Stomach (tissue), 19 donors: ENCODE measurements at regions of chr5 and their contacts with region 1.

Region 1: DNA sequence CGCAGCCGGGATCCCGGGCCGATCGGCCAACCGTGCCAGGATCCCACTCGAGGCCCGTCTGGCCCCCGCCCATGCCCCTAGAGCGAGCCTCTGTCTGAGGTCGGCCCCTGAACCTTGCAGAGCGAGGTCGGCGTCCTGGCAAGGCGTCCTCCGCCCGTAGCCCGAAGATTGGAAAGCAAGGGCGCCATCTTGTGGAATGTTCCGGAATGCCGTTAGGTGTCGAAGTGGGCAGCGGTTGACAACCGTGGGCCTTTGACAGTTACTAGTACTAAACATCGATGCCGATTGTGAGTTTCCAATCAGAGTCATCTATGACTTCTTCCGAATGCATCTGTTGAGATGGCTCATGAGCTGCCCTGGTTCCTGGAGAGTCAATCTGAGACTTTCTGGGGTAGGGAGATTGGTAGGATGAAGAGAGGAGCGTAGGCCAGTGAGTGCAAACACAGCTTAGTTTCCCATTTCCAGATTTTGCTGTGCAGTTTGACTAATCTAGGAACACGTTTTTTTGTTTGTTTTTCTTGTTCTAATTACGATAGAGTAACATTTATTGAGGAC is 923 bp upstream of the PLK2 start:
- DNase-seq: peak; percentile 93 to 96
- H3K4me3 ChIP-seq: peak overlapping the region; percentile 64 to 85 (median 74)
- H3K27ac ChIP-seq: peak overlapping the region; percentile 93 to 99 (median 95)
- H3K4me1 ChIP-seq: peaks cover 5 to 50% (median 16%) of the 10 kb centered on the region in 4 donors
- H3K27me3 ChIP-seq: peaks cover 0 to 4% (median 0%) of the 10 kb centered on the region in 3 donors
- CTCF ChIP-seq: peak in 5 of 7 experiments; percentile 56 to 82 (median 69)
- EP300 ChIP-seq: no peak
- POLR2A ChIP-seq: no peak

Region 2: DNA sequence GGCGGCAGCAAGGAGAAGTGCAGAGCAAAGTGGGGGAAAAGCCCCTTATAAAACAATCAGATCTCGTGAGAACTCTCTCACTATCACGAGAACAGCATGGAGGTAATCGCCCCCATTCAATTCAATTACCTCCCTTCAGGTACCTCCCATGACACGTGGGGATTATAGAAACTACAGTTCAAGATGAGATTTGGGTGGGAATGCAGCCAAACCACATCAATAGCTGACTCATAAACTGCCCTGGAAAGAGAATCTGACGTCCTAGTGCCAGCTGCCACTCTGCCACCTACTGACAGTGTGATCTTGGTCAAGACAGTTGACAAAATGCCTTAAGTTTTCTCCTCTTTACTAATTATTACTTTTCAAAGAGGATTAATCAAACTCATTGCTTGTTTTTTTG is 1158.6 kb before region 1 on chr5:
- intact Hi-C with region 1: loop called (anchors 5 kb)
- DNase-seq: peak in 1 of 2 donors; percentile 34
- H3K4me3 ChIP-seq: no peak overlapping the region
- H3K27ac ChIP-seq: no peak overlapping the region
- H3K4me1 ChIP-seq: peaks cover 6 to 18% (median 10%) of the 10 kb centered on the region in 4 donors
- H3K27me3 ChIP-seq: no peaks in the 10 kb centered on the region
- CTCF ChIP-seq: no peak
- EP300 ChIP-seq: no peak
- POLR2A ChIP-seq: no peak

Region 3: GRCh38 chr5:57499262-57500050 is 961.4 kb before region 1 on chr5:
- intact Hi-C with region 1: loop called (anchors 10 kb)
- DNase-seq: peak in 1 of 2 donors; percentile 77
- H3K4me3 ChIP-seq: peak overlapping the region in 2 of 4 donors; percentile 4 to 23
- H3K27ac ChIP-seq: peak overlapping the region in 3 of 5 donors; percentile 23 to 45 (median 33)
- H3K4me1 ChIP-seq: peaks cover 0 to 41% (median 21%) of the 10 kb centered on the region in 4 donors
- H3K27me3 ChIP-seq: no peaks in the 10 kb centered on the region
- CTCF ChIP-seq: peak in 5 of 7 experiments; percentile 47 to 68 (median 50)
- EP300 ChIP-seq: no peak
- POLR2A ChIP-seq: no peak

Region 4: DNA sequence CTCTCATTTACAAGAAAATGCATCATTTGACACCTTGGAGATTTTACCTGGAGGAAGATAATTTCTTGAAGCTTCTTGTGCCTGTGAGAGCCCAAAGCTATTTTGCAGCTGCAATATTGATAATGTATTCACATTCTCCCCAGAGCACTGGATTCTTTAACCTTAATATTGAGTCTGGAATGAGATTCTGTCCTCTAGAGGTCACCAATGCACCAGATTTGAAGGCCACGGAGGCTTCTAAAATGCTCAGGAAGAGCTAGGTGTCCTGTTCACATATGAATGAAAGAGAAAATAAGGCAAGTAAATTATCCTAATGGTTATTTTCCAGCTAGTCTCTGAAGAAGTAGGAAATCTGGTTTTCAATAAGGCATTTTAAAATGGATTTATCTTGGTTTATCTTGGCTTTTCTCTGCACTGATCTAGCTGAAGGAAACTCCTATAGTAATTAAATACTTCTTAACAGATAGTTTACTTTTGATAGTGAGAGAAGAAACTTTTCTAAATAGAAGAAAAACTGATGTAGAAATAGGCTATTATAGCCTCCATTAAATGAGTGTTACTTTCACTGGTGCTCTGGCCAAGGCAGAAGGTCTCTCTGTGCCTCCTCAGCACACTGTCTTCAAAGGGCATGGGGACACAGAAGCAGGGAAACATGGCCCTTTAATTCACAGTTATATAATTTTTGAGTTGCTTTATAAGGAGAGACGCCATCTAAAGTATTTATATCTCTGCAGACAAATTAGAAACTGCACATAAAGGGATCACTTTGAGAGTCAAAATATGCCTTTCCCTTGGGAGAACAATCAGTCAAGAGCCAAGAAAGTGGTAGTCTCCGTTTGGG is 681.2 kb before region 1 on chr5:
- intact Hi-C with region 1: loop called (anchors 5 kb)
- DNase-seq: peak in 1 of 2 donors; percentile 82
- H3K4me3 ChIP-seq: no peak overlapping the region
- H3K27ac ChIP-seq: peak overlapping the region in 1 of 5 donors; percentile 5
- H3K4me1 ChIP-seq: peaks cover 18 to 47% (median 30%) of the 10 kb centered on the region in 4 donors
- H3K27me3 ChIP-seq: no peaks in the 10 kb centered on the region
- CTCF ChIP-seq: peak in 3 of 7 experiments; percentile 40 to 50 (median 45)
- EP300 ChIP-seq: no peak
- POLR2A ChIP-seq: no peak

Region 5: GRCh38 chr5:57895766-57896165 is 565.0 kb before region 1 on chr5:
- intact Hi-C with region 1: loop called (anchors 10 kb)
- DNase-seq: no peak
- H3K4me3 ChIP-seq: no peak overlapping the region
- H3K27ac ChIP-seq: no peak overlapping the region
- H3K4me1 ChIP-seq: peaks cover 0 to 5% (median 0%) of the 10 kb centered on the region in 4 donors
- H3K27me3 ChIP-seq: no peaks in the 10 kb centered on the region
- CTCF ChIP-seq: no peak
- EP300 ChIP-seq: no peak
- POLR2A ChIP-seq: no peak